ENCODE measurements at regions of chr14 and their contacts with region 1.

Region 1: GRCh38 chr14:69766984-69767368 is at the start of gene SRSF5:
- DNase-seq: peak in 9 of 10 donors; percentile 88 to 97 (median 94)
- ATAC-seq: peak; percentile 74 to 82
- H3K4me3 Mint-ChIP-seq: peak within 1 kb of the TSS; percentile 93 to 100 (median 99)
- H3K27ac Mint-ChIP-seq: peak within 1 kb of the TSS; percentile 100
- H3K4me1 Mint-ChIP-seq: peaks cover 39 to 78% (median 70%) of the 10 kb centered on the region in 4 donors
- H3K27me3 Mint-ChIP-seq: peaks cover 0 to 6% (median 0%) of the 10 kb centered on the region in 5 donors
- polyA plus RNA-seq, gene SRSF5: 1,279 to 1,496 (median 1,446) TPM

Region 2: DNA sequence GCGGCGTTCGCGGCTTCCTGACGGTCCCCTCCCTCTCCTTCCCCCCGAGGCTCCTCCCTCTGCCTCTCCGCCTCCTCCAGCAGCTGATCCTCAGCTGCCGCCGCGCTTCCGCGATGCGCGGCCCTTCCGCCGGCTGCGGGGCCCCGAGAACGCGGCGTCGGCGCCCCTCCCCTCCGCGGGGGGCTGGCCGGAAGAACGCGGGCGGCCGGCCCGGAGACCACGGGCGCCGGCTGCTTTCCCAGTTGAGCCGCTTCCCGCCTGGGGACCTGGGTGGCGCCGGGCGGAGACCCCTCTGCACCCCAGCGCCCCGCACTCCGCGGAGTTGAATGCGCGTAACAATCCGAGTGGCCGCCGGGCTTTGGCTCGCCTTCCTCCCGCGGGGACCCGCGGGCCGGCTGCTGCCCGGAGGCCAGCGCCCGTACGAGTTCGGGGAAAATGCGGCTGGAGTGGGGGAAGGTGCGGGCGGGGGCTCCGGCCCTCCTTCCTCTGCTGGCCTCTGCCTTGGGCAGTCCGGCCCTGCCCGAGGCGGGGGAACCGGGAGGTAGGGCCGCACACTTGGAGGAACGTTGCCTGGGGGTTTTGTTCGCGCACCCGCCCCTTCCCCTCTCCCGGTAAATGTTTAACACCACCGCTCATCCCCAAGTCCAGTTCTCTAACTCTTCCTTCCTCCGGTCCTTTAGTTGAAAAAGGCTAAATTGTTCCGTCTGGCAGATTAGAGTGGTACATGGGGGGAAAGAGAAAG is 613.7 kb before region 1 on chr14:
- POLR2A ChIA-PET with region 1: interaction called, 11 read pairs
- DNase-seq: peak; percentile 84 to 97 (median 91)
- ATAC-seq: peak; percentile 91
- H3K4me3 Mint-ChIP-seq: peak overlapping the region; percentile 93 to 99 (median 98)
- H3K27ac Mint-ChIP-seq: peak overlapping the region; percentile 87 to 97 (median 92)
- H3K4me1 Mint-ChIP-seq: peaks cover 22 to 37% (median 35%) of the 10 kb centered on the region in 4 donors
- H3K27me3 Mint-ChIP-seq: no peaks in the 10 kb centered on the region

Region 3: GRCh38 chr14:69611201-69612011 is 155.6 kb before region 1 on chr14 and contains the start of gene SUSD6:
- POLR2A ChIA-PET with region 1: interaction called, 39 read pairs
- DNase-seq: peak; percentile 81 to 93 (median 86)
- ATAC-seq: peak; percentile 76 to 77
- H3K4me3 Mint-ChIP-seq: peak within 1 kb of the TSS; percentile 89 to 97 (median 92)
- H3K27ac Mint-ChIP-seq: peak within 1 kb of the TSS; percentile 97 to 100 (median 99)
- H3K4me1 Mint-ChIP-seq: peaks cover 37 to 59% (median 57%) of the 10 kb centered on the region in 4 donors
- H3K27me3 Mint-ChIP-seq: no peaks in the 10 kb centered on the region
- polyA plus RNA-seq, gene SUSD6: 4.5 to 6.8 (median 5.6) TPM

Region 4: GRCh38 chr14:69749956-69750355 is 17.0 kb before region 1 on chr14:
- POLR2A ChIA-PET with region 1: interaction called, 50 read pairs
- DNase-seq: no peak
- ATAC-seq: no peak
- H3K4me3 Mint-ChIP-seq: no peak overlapping the region
- H3K27ac Mint-ChIP-seq: no peak overlapping the region
- H3K4me1 Mint-ChIP-seq: peaks cover 4 to 14% (median 10%) of the 10 kb centered on the region in 4 donors
- H3K27me3 Mint-ChIP-seq: peaks cover 0 to 3% (median 0%) of the 10 kb centered on the region in 5 donors

Region 5: DNA sequence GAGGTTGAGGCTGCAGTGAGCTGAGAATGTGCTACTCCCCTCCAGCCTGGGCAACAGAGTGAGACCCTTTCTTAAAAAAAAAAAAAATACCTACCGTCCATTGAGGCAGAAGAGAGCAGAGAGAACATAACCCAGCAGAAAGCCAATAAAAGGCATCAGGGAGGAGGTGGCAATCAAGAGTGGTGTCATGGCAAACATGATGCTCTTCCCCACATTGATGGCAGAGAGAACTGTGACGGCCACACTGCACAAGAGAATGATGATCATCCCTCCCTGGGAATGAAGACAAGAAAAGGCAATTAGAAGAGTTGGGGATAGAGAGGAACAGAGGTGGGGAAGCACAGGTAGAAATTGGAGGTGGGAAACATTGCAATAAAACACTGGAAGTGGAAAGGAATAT is 12.1 kb after region 1 on chr14:
- POLR2A ChIA-PET with region 1: interaction called, 24 read pairs
- DNase-seq: no peak
- ATAC-seq: no peak
- H3K4me3 Mint-ChIP-seq: peak overlapping the region in 1 of 10 donors; percentile 68
- H3K27ac Mint-ChIP-seq: peak overlapping the region in 8 of 10 donors; percentile 3 to 85 (median 56)
- H3K4me1 Mint-ChIP-seq: peaks cover 30 to 67% (median 53%) of the 10 kb centered on the region in 4 donors
- H3K27me3 Mint-ChIP-seq: no peaks in the 10 kb centered on the region

Region 6: DNA sequence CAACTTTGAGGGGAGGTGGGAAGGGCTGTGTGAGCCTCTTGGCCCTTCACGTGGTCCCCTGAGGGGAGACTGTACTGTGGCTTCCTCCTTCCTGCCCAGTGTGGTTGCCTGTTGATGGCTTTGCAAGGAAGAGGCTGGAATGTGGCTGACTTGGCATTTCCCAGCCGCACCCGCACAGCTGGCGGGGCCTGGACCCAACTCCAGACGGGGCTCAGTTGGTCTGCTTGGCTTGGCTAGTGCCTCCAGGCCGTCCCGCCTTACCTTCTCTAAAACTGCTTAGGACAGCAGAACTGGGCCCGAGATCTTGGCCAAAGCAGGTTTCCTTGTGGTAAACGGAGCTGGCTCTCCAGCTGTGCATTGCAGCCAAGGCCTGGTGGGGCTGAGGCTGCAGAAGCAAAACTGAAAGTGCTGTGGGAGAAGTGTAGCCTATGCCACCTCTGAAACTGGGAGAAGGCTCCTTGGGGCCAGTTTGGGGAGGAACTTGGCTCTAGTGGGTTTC is 251.8 kb after region 1 on chr14:
- POLR2A ChIA-PET with region 1: no interaction called
- DNase-seq: no peak
- ATAC-seq: no peak
- H3K4me3 Mint-ChIP-seq: peak overlapping the region in 4 of 10 donors; percentile 3 to 49 (median 16)
- H3K27ac Mint-ChIP-seq: no peak overlapping the region
- H3K4me1 Mint-ChIP-seq: peaks cover 11 to 14% (median 12%) of the 10 kb centered on the region in 4 donors
- H3K27me3 Mint-ChIP-seq: peaks cover 4 to 28% (median 15%) of the 10 kb centered on the region in 5 donors

Measured in naive thymus-derived CD8-positive, alpha-beta T cell (primary cell).